H1 (cell line): ENCODE measurements at regions of chr4 and their contacts with region 1.

Region 1: GRCh38 chr4:8110071-8110986 is 48.3 kb downstream of the ABLIM2 start:
- DNase-seq: peak; percentile 65 to 86
- H3K4me3 ChIP-seq: peak overlapping the region in 2 of 4 experiments; percentile 15 to 20; a peak in 1 of 8 replicates
- H3K27ac ChIP-seq: peak overlapping the region; percentile 65
- H3K4me1 ChIP-seq: peaks cover 12 to 29% (median 16%) of the 10 kb centered on the region in 4 experiments
- H3K27me3 ChIP-seq: no peaks in the 10 kb centered on the region
- CTCF ChIP-seq: peak in 2 of 3 experiments; percentile 75 to 98; a peak in 3 of 4 replicates
- EP300 ChIP-seq: peak in 1 of 2 experiments; percentile 98; a peak in 1 of 3 replicates
- POLR2A ChIP-seq: peak in 1 of 2 experiments; percentile 61; a peak in 2 of 3 replicates
- RAD21 ChIP-seq: peak; percentile 57 to 72

Region 2: DNA sequence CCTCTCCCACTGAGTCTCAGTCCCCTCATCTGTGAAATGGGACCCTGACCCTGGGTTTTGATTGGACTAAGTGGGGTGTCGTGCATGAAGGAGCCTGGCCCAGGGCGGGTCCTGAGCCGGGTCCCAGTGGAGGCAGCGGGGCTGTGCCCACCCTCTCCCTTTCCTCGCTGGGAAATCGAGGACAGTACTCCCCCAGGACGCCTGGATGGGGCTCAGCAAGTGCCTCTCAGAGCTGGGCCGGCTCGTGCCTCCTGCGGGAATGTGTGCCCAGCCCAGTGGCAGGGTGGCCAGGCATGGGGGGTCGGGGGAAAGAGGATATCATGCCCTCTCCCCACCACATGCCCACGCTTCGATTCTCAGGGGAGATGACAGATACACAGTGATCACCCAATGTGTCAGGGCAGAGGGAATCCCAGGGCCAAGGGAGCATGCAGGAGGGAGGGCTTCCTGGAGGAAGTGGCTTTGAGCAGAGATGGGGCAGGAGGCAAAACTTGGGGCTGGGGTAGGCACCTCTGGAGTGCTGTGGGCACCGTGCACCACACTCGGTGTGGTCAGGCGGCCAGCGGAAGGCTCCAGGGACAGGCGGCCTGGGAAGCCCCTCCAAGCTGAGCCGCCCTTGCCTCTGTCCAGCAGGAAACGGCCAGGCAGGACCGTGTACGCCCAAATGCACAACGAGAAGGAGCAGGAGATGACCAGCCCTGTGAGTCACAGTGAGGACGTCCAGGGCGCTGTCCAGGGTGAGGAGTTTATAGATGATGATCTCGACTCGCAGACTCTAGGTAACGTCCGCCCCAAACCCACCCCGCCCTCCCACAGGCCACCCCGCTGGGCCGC is 373.7 kb before region 1 on chr4:
- CTCF ChIA-PET with region 1: no interaction called
- POLR2A ChIA-PET with region 1: no interaction called
- DNase-seq: no peak
- H3K4me3 ChIP-seq: no peak overlapping the region
- H3K27ac ChIP-seq: no peak overlapping the region
- H3K4me1 ChIP-seq: no peaks in the 10 kb centered on the region; a peak in 2 of 7 replicates
- H3K27me3 ChIP-seq: 0 out of 7 replicates have a peak, but pooled peaks cover 0 to 2% (median 0%) of the 10 kb centered on the region in 4 experiments
- CTCF ChIP-seq: no peak
- EP300 ChIP-seq: no peak
- POLR2A ChIP-seq: no peak
- RAD21 ChIP-seq: no peak

Region 3: GRCh38 chr4:8050555-8051206 is 59.6 kb before region 1 on chr4:
- CTCF ChIA-PET with region 1: interaction called, 16 read pairs
- POLR2A ChIA-PET with region 1: no interaction called
- DNase-seq: peak; percentile 65 to 70
- H3K4me3 ChIP-seq: no peak overlapping the region; a peak in 1 of 8 replicates
- H3K27ac ChIP-seq: peak overlapping the region; percentile 86
- H3K4me1 ChIP-seq: peaks cover 6 to 36% (median 28%) of the 10 kb centered on the region in 4 experiments
- H3K27me3 ChIP-seq: no peaks in the 10 kb centered on the region
- CTCF ChIP-seq: peak in 1 of 3 experiments; percentile 1; a peak in 1 of 4 replicates
- EP300 ChIP-seq: peak in 1 of 2 experiments; percentile 57; a peak in 1 of 3 replicates
- POLR2A ChIP-seq: peak in 1 of 2 experiments; percentile 76; a peak in 2 of 3 replicates
- RAD21 ChIP-seq: no peak

Region 4: DNA sequence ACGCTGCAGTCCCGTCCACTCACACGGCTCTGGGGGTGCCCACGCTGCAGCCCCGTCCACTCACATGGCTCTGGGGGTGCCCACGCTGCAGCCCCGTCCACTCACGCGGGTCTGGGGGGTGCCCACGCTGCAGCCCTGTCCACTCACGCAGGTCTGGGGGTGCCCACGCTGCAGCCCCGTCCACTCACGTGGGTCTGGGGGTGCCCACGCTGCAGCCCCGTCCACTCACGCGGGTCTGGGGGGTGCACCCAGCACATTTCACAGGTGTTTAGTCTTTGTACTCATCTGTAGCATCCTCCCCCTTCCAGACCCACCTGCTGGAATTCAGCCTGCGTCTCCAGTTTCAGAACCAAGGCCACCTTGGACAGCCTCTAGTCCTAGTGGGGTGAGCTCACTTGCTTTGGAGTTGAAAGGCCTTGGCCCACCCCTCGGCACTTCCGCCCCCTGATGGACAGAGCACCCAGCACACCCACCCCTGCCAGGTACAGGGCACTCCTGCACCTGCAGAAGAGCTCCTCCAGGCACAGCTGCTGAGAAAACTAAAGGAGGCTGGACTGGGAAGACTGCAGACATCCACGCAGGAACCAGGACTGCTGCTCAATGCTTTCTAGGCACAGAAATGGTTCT is 24.7 kb before region 1 on chr4:
- CTCF ChIA-PET with region 1: interaction called, 22 read pairs
- POLR2A ChIA-PET with region 1: no interaction called
- DNase-seq: no peak
- H3K4me3 ChIP-seq: no peak overlapping the region
- H3K27ac ChIP-seq: no peak overlapping the region
- H3K4me1 ChIP-seq: peaks cover 1 to 6% (median 4%) of the 10 kb centered on the region in 4 experiments; a peak in 6 of 7 replicates
- H3K27me3 ChIP-seq: no peaks in the 10 kb centered on the region
- CTCF ChIP-seq: peak in 2 of 3 experiments; percentile 47 to 62; a peak in 3 of 4 replicates
- EP300 ChIP-seq: no peak
- POLR2A ChIP-seq: no peak
- RAD21 ChIP-seq: peak; percentile 31 to 55

Region 5: DNA sequence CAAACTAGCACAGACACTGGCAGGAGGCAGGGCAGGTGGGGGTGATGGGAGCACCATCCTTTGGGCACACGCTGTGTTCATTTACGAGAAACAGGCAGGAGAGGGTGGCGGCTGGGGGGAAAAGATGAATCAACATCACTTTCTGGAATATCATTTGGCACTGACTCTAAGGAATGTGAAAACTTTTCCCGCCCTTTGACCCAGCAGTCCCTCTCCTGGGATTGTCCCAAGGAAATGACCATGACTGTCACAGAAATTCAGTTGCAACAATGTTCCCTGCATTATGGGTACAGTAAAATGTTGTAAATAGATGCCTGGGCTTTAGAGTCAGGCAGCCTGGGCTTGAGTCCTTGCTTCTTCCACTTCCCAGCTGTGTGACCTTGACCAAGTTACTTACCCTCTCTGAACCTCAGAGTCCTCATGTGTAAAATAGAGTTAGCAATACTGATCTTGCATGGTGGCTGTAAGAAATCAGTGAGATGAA is 10.3 kb before region 1 on chr4:
- CTCF ChIA-PET with region 1: interaction called, 15 read pairs
- POLR2A ChIA-PET with region 1: no interaction called
- DNase-seq: no peak
- H3K4me3 ChIP-seq: no peak overlapping the region
- H3K27ac ChIP-seq: no peak overlapping the region
- H3K4me1 ChIP-seq: peaks cover 4 to 22% (median 16%) of the 10 kb centered on the region in 4 experiments
- H3K27me3 ChIP-seq: no peaks in the 10 kb centered on the region
- CTCF ChIP-seq: no peak
- EP300 ChIP-seq: no peak
- POLR2A ChIP-seq: no peak
- RAD21 ChIP-seq: no peak

Region 6: GRCh38 chr4:8168232-8168631 is 57.9 kb after region 1 on chr4:
- CTCF ChIA-PET with region 1: interaction called, 11 read pairs
- POLR2A ChIA-PET with region 1: no interaction called
- DNase-seq: no peak
- H3K4me3 ChIP-seq: no peak overlapping the region
- H3K27ac ChIP-seq: no peak overlapping the region
- H3K4me1 ChIP-seq: no peaks in the 10 kb centered on the region
- H3K27me3 ChIP-seq: no peaks in the 10 kb centered on the region; a peak in 1 of 7 replicates
- CTCF ChIP-seq: peak in 1 of 3 experiments; percentile 50; a peak in 2 of 4 replicates
- EP300 ChIP-seq: no peak
- POLR2A ChIP-seq: no peak
- RAD21 ChIP-seq: peak; percentile 29 to 37; a peak in 2 of 4 replicates

Region 7: GRCh38 chr4:8228319-8229250 is 118.3 kb after region 1 on chr4:
- CTCF ChIA-PET with region 1: no interaction called
- POLR2A ChIA-PET with region 1: no interaction called
- DNase-seq: no peak
- H3K4me3 ChIP-seq: no peak overlapping the region
- H3K27ac ChIP-seq: no peak overlapping the region
- H3K4me1 ChIP-seq: peaks cover 6 to 17% (median 11%) of the 10 kb centered on the region in 4 experiments
- H3K27me3 ChIP-seq: no peaks in the 10 kb centered on the region; a peak in 1 of 7 replicates
- CTCF ChIP-seq: no peak
- EP300 ChIP-seq: no peak
- POLR2A ChIP-seq: no peak
- RAD21 ChIP-seq: no peak

Region 8: DNA sequence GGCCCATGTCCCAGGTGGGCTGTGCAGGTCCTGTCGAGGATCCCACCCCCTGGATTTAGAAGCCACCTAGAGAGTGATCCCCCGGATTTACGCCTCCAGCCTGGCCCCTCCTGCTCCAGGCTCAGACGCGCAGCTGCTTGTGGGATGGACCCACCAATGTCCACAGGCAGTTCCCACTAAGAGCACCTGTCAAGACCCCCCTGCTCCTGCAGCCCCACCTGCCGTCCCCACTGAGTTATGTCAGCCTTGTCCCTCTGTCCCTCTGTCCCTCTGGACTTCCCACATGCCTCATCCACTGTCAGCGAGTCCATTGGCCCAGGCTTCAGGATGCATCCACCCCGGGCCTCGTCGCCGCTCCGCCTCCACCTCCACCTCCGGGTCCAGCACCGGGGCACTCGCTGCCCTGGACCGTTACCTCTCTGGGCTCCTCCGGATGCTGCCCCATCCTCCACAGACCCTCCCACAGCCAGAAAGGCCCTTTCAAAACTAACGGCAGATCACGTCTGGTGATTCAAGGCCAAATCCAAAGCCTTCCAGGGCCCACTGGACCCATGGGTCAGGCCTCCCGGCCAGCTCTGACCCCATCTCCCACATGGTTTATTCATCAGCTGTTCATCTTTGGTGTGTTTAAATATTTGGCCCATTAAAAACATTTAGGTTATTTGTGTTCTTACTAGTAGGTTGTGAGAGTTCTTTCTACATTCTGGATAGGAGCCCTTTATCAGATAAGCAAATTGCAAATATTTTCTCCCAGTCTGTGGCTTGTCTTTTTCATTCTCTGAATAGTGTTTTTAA is 187.6 kb after region 1 on chr4:
- CTCF ChIA-PET with region 1: no interaction called
- POLR2A ChIA-PET with region 1: no interaction called
- DNase-seq: no peak
- H3K4me3 ChIP-seq: no peak overlapping the region
- H3K27ac ChIP-seq: no peak overlapping the region
- H3K4me1 ChIP-seq: no peaks in the 10 kb centered on the region
- H3K27me3 ChIP-seq: no peaks in the 10 kb centered on the region
- CTCF ChIP-seq: peak in 1 of 3 experiments; percentile 23; a peak in 1 of 4 replicates
- EP300 ChIP-seq: no peak
- POLR2A ChIP-seq: no peak
- RAD21 ChIP-seq: peak; percentile 22 to 29; a peak in 2 of 4 replicates

Region 9: GRCh38 chr4:8615921-8616785 is 505.8 kb after region 1 on chr4:
- CTCF ChIA-PET with region 1: no interaction called
- POLR2A ChIA-PET with region 1: no interaction called
- DNase-seq: no peak
- H3K4me3 ChIP-seq: no peak overlapping the region
- H3K27ac ChIP-seq: no peak overlapping the region
- H3K4me1 ChIP-seq: no peaks in the 10 kb centered on the region
- H3K27me3 ChIP-seq: no peaks in the 10 kb centered on the region
- CTCF ChIP-seq: no peak
- EP300 ChIP-seq: no peak
- POLR2A ChIP-seq: no peak
- RAD21 ChIP-seq: no peak